ENCODE measurements at regions of chr4 and their contacts with region 1.

Region 1: DNA sequence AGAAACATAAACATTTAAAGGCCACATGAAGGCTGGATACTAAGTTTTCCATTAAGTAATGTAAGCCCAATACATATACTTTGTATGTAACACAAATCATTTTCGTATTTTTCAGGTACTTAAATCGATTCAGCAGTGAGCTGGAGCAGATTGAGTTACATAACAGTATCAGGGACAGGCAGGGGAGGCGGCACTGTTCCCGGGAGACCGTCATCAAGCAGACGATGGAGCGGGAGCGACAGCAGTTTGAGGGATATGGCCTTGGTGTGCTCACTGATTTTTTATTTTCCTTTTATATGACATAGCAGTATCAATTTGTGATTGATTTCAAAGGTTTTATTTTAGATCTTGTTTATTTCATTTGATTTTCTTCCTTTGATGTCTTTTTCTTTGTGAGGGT is 20.7 kb downstream of the TMA16 start:
- DNase-seq: no peak
- H3K4me3 ChIP-seq: no peak overlapping the region
- H3K27ac ChIP-seq: no peak overlapping the region
- H3K4me1 ChIP-seq: no peaks in the 10 kb centered on the region
- H3K27me3 ChIP-seq: no peaks in the 10 kb centered on the region
- CTCF ChIP-seq: no peak
- EP300 ChIP-seq: no peak
- RAD21 ChIP-seq: no peak

Region 2: GRCh38 chr4:163484906-163485305 is 30.3 kb before region 1 on chr4:
- CTCF ChIA-PET with region 1: interaction called, 10 read pairs
- POLR2A ChIA-PET with region 1: no interaction called
- DNase-seq: peak; percentile 63
- H3K4me3 ChIP-seq: peak overlapping the region in 1 of 2 experiments; percentile 50; a peak in 1 of 4 replicates
- H3K27ac ChIP-seq: no peak overlapping the region
- H3K4me1 ChIP-seq: no peaks in the 10 kb centered on the region
- H3K27me3 ChIP-seq: peaks cover 18% of the 10 kb centered on the region; the same call in 1 of the 2 replicates
- CTCF ChIP-seq: peak; percentile 76
- EP300 ChIP-seq: no peak
- RAD21 ChIP-seq: peak; percentile 81

Region 3: DNA sequence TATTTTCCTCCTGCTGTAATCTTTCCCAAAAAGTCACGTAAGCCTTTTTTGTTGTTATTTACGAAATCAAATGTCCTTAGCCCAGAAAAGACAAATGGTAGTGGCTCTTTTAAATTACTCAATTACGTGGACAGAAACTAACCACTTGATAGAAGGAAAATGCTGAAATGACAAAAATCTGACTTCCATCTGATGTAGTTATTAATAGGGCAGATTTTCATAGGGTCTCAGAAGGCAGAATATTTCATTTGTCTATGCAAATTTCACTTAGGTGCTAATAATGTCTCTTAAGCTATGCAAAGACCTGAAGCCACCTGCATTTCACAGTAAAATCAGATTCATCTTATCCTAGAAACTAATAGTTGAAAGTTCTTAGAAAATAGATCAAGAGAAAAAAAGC is 275.0 kb after region 1 on chr4:
- CTCF ChIA-PET with region 1: no interaction called
- POLR2A ChIA-PET with region 1: no interaction called
- DNase-seq: no peak
- H3K4me3 ChIP-seq: no peak overlapping the region
- H3K27ac ChIP-seq: no peak overlapping the region
- H3K4me1 ChIP-seq: no peaks in the 10 kb centered on the region
- H3K27me3 ChIP-seq: no peaks in the 10 kb centered on the region
- CTCF ChIP-seq: no peak
- EP300 ChIP-seq: no peak
- RAD21 ChIP-seq: no peak